A549 (cell line): ENCODE measurements at regions of chr2 and their contacts with region 1.

Region 1: GRCh38 chr2:121076885-121077549 is 208.0 kb downstream of the TFCP2L1 start:
- DNase-seq: peak; percentile 58 to 75
- ATAC-seq: peak; percentile 48 to 73
- H3K4me3 ChIP-seq: no peak overlapping the region
- H3K27ac ChIP-seq: peak overlapping the region in 1 of 2 experiments; percentile 92; a peak in 2 of 6 replicates
- H3K4me1 ChIP-seq: peaks cover 29% of the 10 kb centered on the region
- CTCF ChIP-seq: peak; percentile 80
- EP300 ChIP-seq: no peak
- POLR2A ChIP-seq: no peak
- RAD21 ChIP-seq: peak; percentile 36

Region 2: GRCh38 chr2:120343433-120344105 is 733.4 kb before region 1 on chr2:
- CTCF ChIA-PET with region 1: interaction called, 18 read pairs
- POLR2A ChIA-PET with region 1: interaction called, 4 read pairs
- DNase-seq: peak; percentile 80 to 91
- ATAC-seq: peak; percentile 66 to 89
- H3K4me3 ChIP-seq: peak overlapping the region; percentile 85
- H3K27ac ChIP-seq: peak overlapping the region; percentile 83 to 93
- H3K4me1 ChIP-seq: peaks cover 27% of the 10 kb centered on the region
- CTCF ChIP-seq: peak; percentile 91
- EP300 ChIP-seq: no peak
- POLR2A ChIP-seq: no peak
- RAD21 ChIP-seq: peak; percentile 96 to 99

Region 3: GRCh38 chr2:120703330-120703994 is 373.6 kb before region 1 on chr2:
- CTCF ChIA-PET with region 1: interaction called, 858 read pairs
- POLR2A ChIA-PET with region 1: no interaction called
- DNase-seq: peak in 1 of 2 experiments; percentile 45
- ATAC-seq: peak; percentile 72 to 76
- H3K4me3 ChIP-seq: no peak overlapping the region
- H3K27ac ChIP-seq: peak overlapping the region in 1 of 2 experiments; percentile 62; a peak in 5 of 6 replicates
- H3K4me1 ChIP-seq: peaks cover 23% of the 10 kb centered on the region
- CTCF ChIP-seq: no peak
- EP300 ChIP-seq: no peak
- POLR2A ChIP-seq: no peak
- RAD21 ChIP-seq: no peak

Region 4: DNA sequence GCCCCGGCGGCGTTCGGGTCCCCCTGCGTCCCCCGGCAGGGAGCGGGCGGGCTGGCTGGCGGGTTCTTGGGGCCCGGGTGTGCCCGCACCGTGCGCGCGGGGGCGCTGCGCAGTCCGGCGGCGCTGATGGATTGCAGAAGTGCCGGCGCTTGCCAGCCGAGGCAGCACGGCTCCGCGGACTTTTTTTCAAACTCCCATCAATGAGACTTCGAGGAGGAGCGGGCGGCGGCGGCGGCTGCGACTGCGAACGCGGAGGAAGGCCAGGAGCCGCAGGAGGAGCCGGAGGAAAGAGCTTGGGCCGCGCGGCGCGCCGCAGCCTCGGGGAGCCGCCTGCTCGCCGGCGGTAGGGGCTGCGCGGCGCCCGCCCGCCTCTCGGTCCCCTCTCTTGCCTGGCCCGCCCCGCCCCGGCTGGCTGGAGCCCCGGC is 341.3 kb before region 1 on chr2 and contains the start of gene GLI2:
- CTCF ChIA-PET with region 1: interaction called, 19 read pairs
- POLR2A ChIA-PET with region 1: interaction called, 25 read pairs
- DNase-seq: peak; percentile 61 to 89
- ATAC-seq: peak; percentile 69 to 75
- H3K4me3 ChIP-seq: peak within 1 kb of the TSS; percentile 73
- H3K27ac ChIP-seq: peak within 1 kb of the TSS; percentile 93 to 98
- H3K4me1 ChIP-seq: peaks cover 39% of the 10 kb centered on the region
- CTCF ChIP-seq: peak; percentile 81
- EP300 ChIP-seq: no peak
- POLR2A ChIP-seq: peak; percentile 40
- RAD21 ChIP-seq: peak; percentile 45 to 80
- polyA plus RNA-seq, gene GLI2: 5.6 and 7.5 TPM in 2 replicates

Region 5: DNA sequence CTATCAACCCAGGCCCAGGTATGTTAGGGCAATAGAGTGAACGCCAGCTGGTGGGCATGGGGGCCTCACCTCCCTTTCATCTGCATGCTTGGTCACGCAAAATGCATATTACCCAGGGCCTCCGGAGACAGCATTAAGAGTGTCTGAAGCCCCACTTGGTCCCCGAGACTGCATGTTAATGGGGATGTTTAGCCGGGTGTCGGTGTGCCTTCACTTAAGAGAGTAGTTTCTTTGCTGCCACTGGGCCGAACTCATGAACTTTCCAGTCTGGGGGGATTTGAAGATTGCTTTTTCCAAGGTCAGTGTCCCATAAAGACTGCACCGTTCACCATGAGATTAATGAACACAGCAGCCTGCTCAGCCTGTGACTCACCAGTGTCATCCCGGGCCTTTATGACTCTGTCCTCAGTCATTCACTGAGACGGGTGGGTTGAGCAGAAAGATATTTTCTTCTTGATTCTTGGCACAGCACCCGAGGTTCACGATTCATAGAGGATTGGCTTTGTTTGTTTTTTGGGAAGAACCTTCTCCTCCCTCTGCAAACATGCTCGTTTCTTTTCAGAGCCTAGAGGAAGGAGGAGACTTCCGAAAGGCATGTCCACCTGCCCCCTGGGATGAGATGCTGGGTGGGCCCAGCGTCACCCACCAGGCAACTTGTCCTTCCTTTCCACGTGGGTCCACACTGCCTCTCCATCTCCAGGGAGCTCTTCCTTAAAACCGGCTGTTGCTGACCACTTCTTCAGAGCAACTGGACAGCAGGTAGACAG is 142.3 kb before region 1 on chr2:
- CTCF ChIA-PET with region 1: interaction called, 23 read pairs
- POLR2A ChIA-PET with region 1: interaction called, 30 read pairs
- DNase-seq: peak; percentile 97 to 99
- ATAC-seq: peak; percentile 67 to 77
- H3K4me3 ChIP-seq: peak overlapping the region; percentile 21
- H3K27ac ChIP-seq: peak overlapping the region; percentile 97 to 98
- H3K4me1 ChIP-seq: peaks cover 77% of the 10 kb centered on the region
- CTCF ChIP-seq: no peak
- EP300 ChIP-seq: peak; percentile 98
- POLR2A ChIP-seq: no peak
- RAD21 ChIP-seq: peak in 1 of 2 experiments; percentile 51; a peak in 3 of 5 replicates

Region 6: GRCh38 chr2:121372721-121373353 is 295.8 kb after region 1 on chr2:
- CTCF ChIA-PET with region 1: no interaction called
- POLR2A ChIA-PET with region 1: no interaction called
- DNase-seq: no peak
- ATAC-seq: no peak
- H3K4me3 ChIP-seq: no peak overlapping the region
- H3K27ac ChIP-seq: no peak overlapping the region
- H3K4me1 ChIP-seq: no peaks in the 10 kb centered on the region
- CTCF ChIP-seq: no peak
- EP300 ChIP-seq: no peak
- POLR2A ChIP-seq: no peak
- RAD21 ChIP-seq: no peak

Region 7: GRCh38 chr2:121530212-121530705 is 453.2 kb after region 1 on chr2:
- CTCF ChIA-PET with region 1: no interaction called
- POLR2A ChIA-PET with region 1: interaction called, 20 read pairs
- DNase-seq: peak; percentile 66 to 84
- ATAC-seq: peak; percentile 86
- H3K4me3 ChIP-seq: peak overlapping the region; percentile 61
- H3K27ac ChIP-seq: peak overlapping the region; percentile 91 to 99
- H3K4me1 ChIP-seq: peaks cover 28% of the 10 kb centered on the region
- CTCF ChIP-seq: no peak
- EP300 ChIP-seq: no peak
- POLR2A ChIP-seq: peak; percentile 42
- RAD21 ChIP-seq: no peak